H1 (cell line): ENCODE measurements at regions of chr11 and their contacts with region 1.

Region 1: GRCh38 chr11:17384002-17384511 is 4.4 kb downstream of the KCNJ11 start:
- DNase-seq: peak; percentile 58 to 83
- H3K4me3 ChIP-seq: no peak overlapping the region
- H3K27ac ChIP-seq: no peak overlapping the region
- H3K4me1 ChIP-seq: peaks cover 0 to 8% (median 0%) of the 10 kb centered on the region in 4 experiments; a peak in 1 of 7 replicates
- H3K27me3 ChIP-seq: peaks cover 0 to 2% (median 0%) of the 10 kb centered on the region in 4 experiments; a peak in 1 of 7 replicates
- CTCF ChIP-seq: peak; percentile 79 to 97 (median 94)
- EP300 ChIP-seq: no peak
- POLR2A ChIP-seq: no peak
- RAD21 ChIP-seq: peak; percentile 98 to 100

Region 2: DNA sequence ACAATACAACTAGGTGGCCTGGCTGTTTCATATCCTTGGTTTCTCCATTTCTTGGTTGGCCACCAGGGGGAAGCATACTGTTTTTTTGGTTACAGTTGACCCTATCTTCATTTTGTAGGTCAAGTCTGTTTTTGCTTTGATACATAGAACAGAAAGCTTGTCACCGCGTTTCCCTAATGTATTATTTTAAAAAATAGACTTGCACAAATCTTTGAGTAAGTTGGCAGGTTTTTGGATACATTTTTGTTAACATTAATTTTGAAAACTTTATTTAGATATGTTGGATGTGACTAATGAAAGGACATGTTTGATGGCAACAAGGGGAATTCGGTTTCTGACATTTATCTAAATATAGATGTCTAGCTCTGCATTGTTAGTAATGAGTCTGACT is 29.5 kb before region 1 on chr11:
- CTCF ChIA-PET with region 1: interaction called, 11 read pairs
- POLR2A ChIA-PET with region 1: no interaction called
- DNase-seq: peak in 1 of 2 experiments; percentile 80
- H3K4me3 ChIP-seq: no peak overlapping the region
- H3K27ac ChIP-seq: no peak overlapping the region
- H3K4me1 ChIP-seq: peaks cover 0 to 8% (median 4%) of the 10 kb centered on the region in 4 experiments; a peak in 5 of 7 replicates
- H3K27me3 ChIP-seq: peaks cover 29 to 47% (median 40%) of the 10 kb centered on the region in 4 experiments
- CTCF ChIP-seq: peak in 2 of 3 experiments; percentile 54 to 59; a peak in 2 of 4 replicates
- EP300 ChIP-seq: no peak
- POLR2A ChIP-seq: no peak
- RAD21 ChIP-seq: peak; percentile 26 to 54; a peak in 3 of 4 replicates

Region 3: DNA sequence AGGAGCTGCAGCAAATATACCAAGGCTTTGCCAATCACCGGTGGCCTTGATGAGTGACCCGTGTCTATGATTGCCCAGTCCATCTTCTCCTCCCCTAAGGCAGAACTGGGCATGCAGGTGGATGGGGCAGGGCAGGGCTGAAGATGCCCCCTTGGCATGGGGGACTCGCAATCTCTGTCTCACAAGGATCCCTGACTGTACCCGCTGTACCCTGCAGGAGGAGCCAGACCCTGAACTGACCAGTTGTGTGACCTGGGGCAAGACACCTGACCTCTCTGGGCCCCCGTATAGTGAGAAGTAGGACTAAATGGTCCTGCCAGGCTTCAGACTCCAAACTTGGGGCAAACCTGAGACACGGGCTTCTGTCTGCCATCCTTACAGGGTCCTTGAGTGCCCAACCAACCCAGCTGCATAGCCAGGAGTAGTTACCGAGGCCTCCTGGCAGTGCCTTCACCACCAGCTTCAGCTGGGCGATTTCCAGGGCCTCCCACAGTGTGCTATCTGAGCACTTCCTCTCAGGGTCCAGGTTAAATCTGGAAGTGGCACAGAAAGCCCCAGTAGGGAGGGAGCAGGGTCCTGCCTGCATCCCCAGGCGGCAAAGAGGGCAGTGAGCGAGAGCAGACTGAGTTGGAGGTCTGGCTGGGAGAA is 10.8 kb after region 1 on chr11:
- CTCF ChIA-PET with region 1: interaction called, 44 read pairs
- POLR2A ChIA-PET with region 1: no interaction called
- DNase-seq: no peak
- H3K4me3 ChIP-seq: no peak overlapping the region
- H3K27ac ChIP-seq: no peak overlapping the region
- H3K4me1 ChIP-seq: peaks cover 0 to 3% (median under 1%) of the 10 kb centered on the region in 4 experiments; a peak in 3 of 7 replicates
- H3K27me3 ChIP-seq: peaks cover 0 to 6% (median 0%) of the 10 kb centered on the region in 4 experiments; a peak in 4 of 7 replicates
- CTCF ChIP-seq: peak; percentile 18 to 54 (median 48); a peak in 3 of 4 replicates
- EP300 ChIP-seq: no peak
- POLR2A ChIP-seq: no peak
- RAD21 ChIP-seq: peak; percentile 20 to 39; a peak in 2 of 4 replicates

Region 4: GRCh38 chr11:17418444-17419081 is 34.5 kb after region 1 on chr11:
- CTCF ChIA-PET with region 1: interaction called, 36 read pairs
- POLR2A ChIA-PET with region 1: interaction called, 3 read pairs
- DNase-seq: no peak
- H3K4me3 ChIP-seq: no peak overlapping the region
- H3K27ac ChIP-seq: no peak overlapping the region
- H3K4me1 ChIP-seq: peaks cover 0 to 5% (median 2%) of the 10 kb centered on the region in 4 experiments; a peak in 2 of 7 replicates
- H3K27me3 ChIP-seq: no peaks in the 10 kb centered on the region; a peak in 2 of 7 replicates
- CTCF ChIP-seq: no peak
- EP300 ChIP-seq: no peak
- POLR2A ChIP-seq: no peak
- RAD21 ChIP-seq: no peak

Region 5: DNA sequence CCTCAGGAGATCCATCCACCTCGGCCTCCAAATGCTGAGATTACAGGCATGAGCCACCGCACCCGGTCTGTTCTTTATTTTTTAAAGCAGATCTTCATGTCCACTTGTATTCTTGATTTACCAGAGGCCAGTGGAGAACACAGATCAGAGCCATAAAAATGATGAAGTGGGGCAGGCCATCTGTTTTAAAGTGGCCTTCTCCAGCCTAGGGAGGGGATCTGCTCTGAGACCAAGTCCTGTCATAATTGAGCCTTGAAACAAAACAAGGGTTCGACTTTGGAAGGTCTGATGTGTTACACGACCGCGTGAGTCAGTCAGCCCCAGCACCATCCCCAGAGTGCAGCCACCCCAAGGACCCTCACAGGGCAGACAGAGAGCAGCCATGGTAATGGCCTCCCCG is 65.1 kb after region 1 on chr11:
- CTCF ChIA-PET with region 1: interaction called, 12 read pairs
- POLR2A ChIA-PET with region 1: no interaction called
- DNase-seq: no peak
- H3K4me3 ChIP-seq: no peak overlapping the region
- H3K27ac ChIP-seq: no peak overlapping the region
- H3K4me1 ChIP-seq: peaks cover 0 to 2% (median 0%) of the 10 kb centered on the region in 4 experiments; a peak in 2 of 7 replicates
- H3K27me3 ChIP-seq: no peaks in the 10 kb centered on the region
- CTCF ChIP-seq: no peak
- EP300 ChIP-seq: no peak
- POLR2A ChIP-seq: no peak
- RAD21 ChIP-seq: no peak

Region 6: GRCh38 chr11:17489751-17490150 is 105.7 kb after region 1 on chr11:
- CTCF ChIA-PET with region 1: interaction called, 1,414 read pairs
- POLR2A ChIA-PET with region 1: no interaction called
- DNase-seq: no peak
- H3K4me3 ChIP-seq: no peak overlapping the region
- H3K27ac ChIP-seq: no peak overlapping the region
- H3K4me1 ChIP-seq: no peaks in the 10 kb centered on the region; a peak in 1 of 7 replicates
- H3K27me3 ChIP-seq: 0 out of 7 replicates have a peak, but pooled peaks cover 0 to 2% (median 0%) of the 10 kb centered on the region in 4 experiments
- CTCF ChIP-seq: no peak
- EP300 ChIP-seq: no peak
- POLR2A ChIP-seq: no peak
- RAD21 ChIP-seq: no peak

Region 7: DNA sequence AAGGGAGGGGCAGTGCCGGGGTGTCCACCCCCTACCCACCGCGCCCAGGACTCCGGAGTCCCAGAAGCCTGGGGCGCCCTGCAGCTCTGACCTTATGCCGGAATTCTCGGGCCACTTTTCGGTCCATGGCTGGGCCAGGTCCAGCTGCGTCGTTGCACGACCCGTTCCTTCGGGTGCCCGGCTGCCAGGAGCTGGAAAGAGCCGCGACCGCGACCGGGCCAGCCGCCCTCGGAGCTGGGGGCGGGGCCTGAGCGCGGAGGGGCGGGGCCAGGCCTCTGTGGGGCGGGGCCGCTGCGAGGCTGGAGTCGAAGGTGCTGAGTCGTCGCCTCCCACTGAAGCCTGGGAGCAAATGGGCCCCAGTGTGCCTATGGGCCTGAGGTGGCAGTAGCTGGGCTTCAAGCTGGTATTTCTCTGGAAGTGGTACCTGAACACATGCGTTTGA is 160.1 kb after region 1 on chr11 and contains the start of gene USH1C:
- CTCF ChIA-PET with region 1: interaction called, 22 read pairs
- POLR2A ChIA-PET with region 1: no interaction called
- DNase-seq: peak in 1 of 2 experiments; percentile 95
- H3K4me3 ChIP-seq: peak within 1 kb of the TSS; percentile 50 to 77 (median 62)
- H3K27ac ChIP-seq: no peak within 1 kb of the TSS
- H3K4me1 ChIP-seq: peaks cover 6 to 20% (median 9%) of the 10 kb centered on the region in 4 experiments
- H3K27me3 ChIP-seq: peaks cover 0 to 24% (median 8%) of the 10 kb centered on the region in 4 experiments; a peak in 4 of 7 replicates
- CTCF ChIP-seq: no peak
- EP300 ChIP-seq: no peak
- POLR2A ChIP-seq: no peak; a peak in 1 of 3 replicates
- RAD21 ChIP-seq: no peak
- total RNA-seq, gene USH1C: 1.3 and 2.4 TPM in 2 replicates

Region 8: DNA sequence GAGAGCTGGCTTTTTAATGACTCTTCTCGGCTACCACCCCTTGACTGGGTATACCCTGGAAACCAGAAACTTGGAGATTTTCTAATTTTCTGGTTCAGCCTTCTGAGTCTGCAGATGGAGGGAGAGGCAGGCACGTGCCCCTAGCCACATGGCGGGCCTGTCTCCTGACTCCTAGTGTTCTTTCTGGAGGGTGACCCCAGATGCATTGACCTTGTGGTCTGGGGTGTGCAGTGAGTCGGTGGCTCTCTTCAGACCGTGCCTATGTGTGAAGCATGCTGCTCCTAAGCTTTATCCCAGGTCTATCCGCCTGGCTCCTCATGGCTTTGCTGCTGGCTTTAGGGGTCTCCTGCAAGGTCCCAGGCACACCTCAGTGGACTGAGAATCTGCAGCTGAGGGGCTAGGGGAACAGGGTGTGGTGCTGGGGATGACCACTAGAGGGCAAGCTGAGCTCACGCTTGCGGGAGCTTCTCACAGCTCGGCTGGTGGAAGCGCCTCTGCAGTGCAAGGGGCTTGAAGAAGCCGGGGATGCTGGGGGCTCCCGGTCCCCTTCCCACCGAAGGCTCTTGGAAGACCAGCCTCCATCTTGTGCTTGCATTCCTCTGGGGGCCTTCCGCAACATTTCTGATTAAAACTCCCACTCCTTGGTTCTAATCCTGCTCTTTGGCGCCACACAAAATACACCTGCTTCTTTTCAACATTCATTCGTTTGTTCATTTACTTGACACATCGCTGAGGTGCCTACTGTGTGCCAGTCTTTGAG is 214.8 kb after region 1 on chr11:
- CTCF ChIA-PET with region 1: no interaction called
- POLR2A ChIA-PET with region 1: no interaction called
- DNase-seq: peak; percentile 75 to 96
- H3K4me3 ChIP-seq: no peak overlapping the region
- H3K27ac ChIP-seq: no peak overlapping the region
- H3K4me1 ChIP-seq: peaks cover 0 to 4% (median 2%) of the 10 kb centered on the region in 4 experiments; a peak in 3 of 7 replicates
- H3K27me3 ChIP-seq: peaks cover 0 to 10% (median 4%) of the 10 kb centered on the region in 4 experiments; a peak in 2 of 7 replicates
- CTCF ChIP-seq: peak; percentile 97 to 99 (median 99)
- EP300 ChIP-seq: no peak
- POLR2A ChIP-seq: no peak
- RAD21 ChIP-seq: peak; percentile 98 to 99